SK-N-SH (cell line): ENCODE measurements at regions of chr1 and their contacts with region 1.

Region 1: GRCh38 chr1:39081266-39082009 is 55.3 kb downstream of the NDUFS5 start:
- DNase-seq: peak; percentile 89
- H3K4me3 ChIP-seq: peak overlapping the region; percentile 60 to 63
- H3K27ac ChIP-seq: no peak overlapping the region
- H3K4me1 ChIP-seq: peaks cover 0 to 6% of the 10 kb centered on the region in 2 experiments; a peak in 1 of 4 replicates
- H3K27me3 ChIP-seq: peaks cover 8% of the 10 kb centered on the region; the same call in 1 of the 2 replicates
- CTCF ChIP-seq: 0 out of 2 replicates have a peak, but pooled peaks have one; percentile 9
- EP300 ChIP-seq: no peak
- RAD21 ChIP-seq: no peak

Region 2: DNA sequence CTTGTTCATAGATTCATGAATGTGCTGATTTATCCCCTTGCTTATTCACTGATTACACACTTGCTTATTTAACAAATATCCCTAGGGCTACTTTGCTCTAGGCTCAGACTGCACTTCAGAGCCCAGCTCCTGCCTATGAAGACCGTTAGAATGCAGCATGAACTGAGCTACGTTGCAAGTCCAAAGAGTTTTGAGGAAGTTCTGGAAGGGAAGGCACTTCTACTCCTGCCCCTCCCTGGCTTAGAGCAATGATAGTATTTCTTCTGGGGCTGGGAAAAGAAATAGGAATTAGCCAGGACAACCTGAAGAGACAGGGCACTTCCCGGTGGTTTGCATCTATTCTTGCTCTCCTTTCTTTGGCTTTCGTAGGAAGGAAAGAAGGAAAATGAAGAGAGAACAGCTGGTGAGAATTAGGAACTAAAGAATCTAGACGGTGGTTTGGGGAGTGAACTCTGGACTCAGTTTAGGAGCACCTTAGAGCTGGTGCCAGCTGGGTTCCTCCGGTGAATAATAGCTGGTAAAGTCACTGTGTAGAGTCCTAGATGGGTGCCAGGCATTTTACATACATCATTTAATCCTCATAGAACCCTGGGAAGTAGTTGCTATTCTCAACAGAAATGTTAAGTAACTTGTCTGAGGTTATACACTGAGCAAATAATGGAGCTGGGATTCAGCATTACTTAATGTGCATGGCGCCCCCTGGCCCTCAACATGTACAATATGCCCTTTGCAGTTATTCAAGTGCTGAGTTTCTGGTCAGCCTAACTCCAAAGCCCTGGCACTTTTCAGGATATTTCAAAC is 10.6 kb after region 1 on chr1:
- CTCF ChIA-PET with region 1: interaction called, 24 read pairs
- POLR2A ChIA-PET with region 1: no interaction called
- DNase-seq: peak; percentile 52
- H3K4me3 ChIP-seq: no peak overlapping the region
- H3K27ac ChIP-seq: no peak overlapping the region
- H3K4me1 ChIP-seq: peaks cover 3 to 4% of the 10 kb centered on the region in 2 experiments; a peak in 3 of 4 replicates
- H3K27me3 ChIP-seq: no peaks in the 10 kb centered on the region
- CTCF ChIP-seq: peak; percentile 87
- EP300 ChIP-seq: no peak
- RAD21 ChIP-seq: peak; percentile 87